PC-3 (cell line): ENCODE measurements at regions of chr11 and their contacts with region 1.

Region 1: GRCh38 chr11:47523468-47524225 is 29.3 kb downstream of the CELF1 start:
- DNase-seq: peak; percentile 74
- ATAC-seq: peak; percentile 92
- H3K4me3 ChIP-seq: peak overlapping the region; percentile 36; the same call in 1 of the 2 replicates
- H3K27ac ChIP-seq: peak overlapping the region; percentile 65
- H3K4me1 ChIP-seq: peaks cover 24% of the 10 kb centered on the region
- H3K27me3 ChIP-seq: no peaks in the 10 kb centered on the region
- CTCF ChIP-seq: no peak

Region 2: DNA sequence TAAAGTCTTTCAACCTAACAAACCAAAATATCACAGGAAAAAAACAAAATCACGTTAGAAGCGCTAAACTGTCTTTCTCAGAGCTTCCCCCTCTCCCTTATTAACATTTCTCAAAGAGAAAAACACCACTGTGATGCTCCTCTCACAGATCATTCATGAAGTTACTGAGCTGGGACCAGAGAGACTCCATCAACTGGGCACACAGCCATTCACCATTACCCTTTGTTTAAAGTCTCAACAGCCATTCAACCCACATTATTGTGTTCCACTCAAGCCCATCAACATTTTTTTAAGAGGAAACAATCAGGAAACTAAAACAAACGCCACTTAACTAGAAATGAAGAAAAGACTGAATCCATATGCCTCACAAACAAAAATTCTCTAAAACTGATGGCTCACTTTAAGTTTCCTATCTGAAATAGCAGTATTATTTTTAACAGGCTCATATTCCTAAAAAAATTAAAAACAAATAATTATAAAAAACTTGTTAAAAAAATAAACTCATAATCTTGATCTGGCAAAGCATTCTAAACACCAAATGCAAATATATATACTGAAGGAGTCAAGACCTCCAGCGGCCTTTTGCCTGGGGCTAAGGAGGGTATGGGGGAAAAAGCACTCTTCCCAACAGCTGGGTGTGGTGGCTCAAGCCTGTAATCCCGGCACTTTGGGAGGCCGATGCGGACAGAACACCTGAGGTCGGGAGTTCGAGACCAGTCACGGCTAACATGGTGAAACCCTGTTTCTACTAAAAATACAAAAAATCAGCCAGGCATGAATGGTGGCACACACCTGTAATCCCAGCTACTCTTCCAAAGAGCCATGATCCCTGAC is 15.3 kb after region 1 on chr11:
- CTCF ChIA-PET with region 1: interaction called, 7 read pairs
- POLR2A ChIA-PET with region 1: interaction called, 5 read pairs
- intact Hi-C with region 1: loop called (anchors 2 kb)
- DNase-seq: no peak
- ATAC-seq: no peak
- H3K4me3 ChIP-seq: peak overlapping the region; percentile 46; the same call in 1 of the 2 replicates
- H3K27ac ChIP-seq: peak overlapping the region; percentile 91
- H3K4me1 ChIP-seq: peaks cover 38% of the 10 kb centered on the region
- H3K27me3 ChIP-seq: no peaks in the 10 kb centered on the region
- CTCF ChIP-seq: no peak